ENCODE measurements at regions of chr9 and their contacts with region 1.

Region 1: GRCh38 chr9:34989003-34989945 is at the start of gene DNAJB5:
- DNase-seq: peak; percentile 100
- H3K4me3 ChIP-seq: peak within 1 kb of the TSS; percentile 47 to 88 (median 60)
- H3K27ac ChIP-seq: peak within 1 kb of the TSS; percentile 79
- H3K4me1 ChIP-seq: peaks cover 40% of the 10 kb centered on the region
- H3K27me3 ChIP-seq: no peaks in the 10 kb centered on the region
- CTCF ChIP-seq: no peak
- POLR2A ChIP-seq: peak; percentile 67
- total RNA-seq, gene DNAJB5: 9.7 and 12.8 TPM in 2 replicates

Region 2: GRCh38 chr9:34675048-34675714 is 314.1 kb before region 1 on chr9:
- CTCF ChIA-PET with region 1: interaction called, 3 read pairs
- POLR2A ChIA-PET with region 1: no interaction called
- dilution Hi-C with region 1: no loop called
- intact Hi-C with region 1: loop called (anchors 10 kb)
- DNase-seq: peak; percentile 72
- H3K4me3 ChIP-seq: no peak overlapping the region
- H3K27ac ChIP-seq: no peak overlapping the region
- H3K4me1 ChIP-seq: no peaks in the 10 kb centered on the region
- H3K27me3 ChIP-seq: no peaks in the 10 kb centered on the region
- CTCF ChIP-seq: peak; percentile 86 to 94
- POLR2A ChIP-seq: no peak

Region 3: GRCh38 chr9:34971146-34971811 is 18.0 kb before region 1 on chr9:
- CTCF ChIA-PET with region 1: interaction called, 21 read pairs
- POLR2A ChIA-PET with region 1: no interaction called
- dilution Hi-C with region 1: no loop called
- intact Hi-C with region 1: no loop called
- DNase-seq: no peak
- H3K4me3 ChIP-seq: no peak overlapping the region
- H3K27ac ChIP-seq: no peak overlapping the region
- H3K4me1 ChIP-seq: no peaks in the 10 kb centered on the region
- H3K27me3 ChIP-seq: peaks cover 13 to 36% of the 10 kb centered on the region in 2 experiments
- CTCF ChIP-seq: no peak
- POLR2A ChIP-seq: no peak

Region 4: GRCh38 chr9:35051069-35051967 is 62.0 kb after region 1 on chr9:
- CTCF ChIA-PET with region 1: interaction called, 56 read pairs
- POLR2A ChIA-PET with region 1: interaction called, 4 read pairs
- dilution Hi-C with region 1: no loop called
- intact Hi-C with region 1: no loop called
- DNase-seq: peak; percentile 56
- H3K4me3 ChIP-seq: no peak overlapping the region
- H3K27ac ChIP-seq: no peak overlapping the region
- H3K4me1 ChIP-seq: no peaks in the 10 kb centered on the region
- H3K27me3 ChIP-seq: no peaks in the 10 kb centered on the region
- CTCF ChIP-seq: peak; percentile 59 to 65
- POLR2A ChIP-seq: no peak

Region 5: GRCh38 chr9:35111001-35111933 is 122.0 kb after region 1 on chr9:
- CTCF ChIA-PET with region 1: no interaction called
- POLR2A ChIA-PET with region 1: no interaction called
- dilution Hi-C with region 1: no loop called
- intact Hi-C with region 1: loop called (anchors 1 kb)
- DNase-seq: peak; percentile 98
- H3K4me3 ChIP-seq: peak overlapping the region; percentile 45 to 85 (median 60)
- H3K27ac ChIP-seq: peak overlapping the region; percentile 92
- H3K4me1 ChIP-seq: peaks cover 47% of the 10 kb centered on the region
- H3K27me3 ChIP-seq: no peaks in the 10 kb centered on the region
- CTCF ChIP-seq: no peak
- POLR2A ChIP-seq: peak; percentile 72

Region 6: DNA sequence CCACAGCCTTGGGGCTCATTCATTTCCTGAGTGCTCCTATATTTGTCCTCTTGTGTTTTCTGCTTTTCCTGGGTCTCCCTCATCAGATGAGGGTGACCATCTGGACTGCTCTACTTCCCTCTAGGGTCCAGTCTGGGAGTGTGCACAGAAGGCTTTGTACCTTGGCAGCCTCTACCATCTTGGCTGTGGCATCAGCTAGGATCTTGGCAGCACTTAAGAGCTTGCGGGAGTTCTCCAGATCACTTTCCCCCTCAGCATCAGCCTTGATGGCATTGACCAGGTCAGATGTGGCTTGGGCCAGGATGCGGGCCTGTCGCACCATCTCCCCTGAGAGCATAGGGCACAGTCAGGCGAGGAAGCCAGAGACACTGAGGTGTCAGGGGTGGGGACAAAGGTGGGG is 727.0 kb after region 1 on chr9:
- CTCF ChIA-PET with region 1: no interaction called
- POLR2A ChIA-PET with region 1: no interaction called
- dilution Hi-C with region 1: no loop called
- intact Hi-C with region 1: no loop called
- DNase-seq: no peak
- H3K4me3 ChIP-seq: no peak overlapping the region
- H3K27ac ChIP-seq: no peak overlapping the region
- H3K4me1 ChIP-seq: no peaks in the 10 kb centered on the region
- H3K27me3 ChIP-seq: no peaks in the 10 kb centered on the region
- CTCF ChIP-seq: no peak
- POLR2A ChIP-seq: no peak

Measured in endothelial cell of umbilical vein (primary cell).